Aorta (tissue), 5 donors: ENCODE measurements at regions of chr4 and their contacts with region 1.

Region 1: DNA sequence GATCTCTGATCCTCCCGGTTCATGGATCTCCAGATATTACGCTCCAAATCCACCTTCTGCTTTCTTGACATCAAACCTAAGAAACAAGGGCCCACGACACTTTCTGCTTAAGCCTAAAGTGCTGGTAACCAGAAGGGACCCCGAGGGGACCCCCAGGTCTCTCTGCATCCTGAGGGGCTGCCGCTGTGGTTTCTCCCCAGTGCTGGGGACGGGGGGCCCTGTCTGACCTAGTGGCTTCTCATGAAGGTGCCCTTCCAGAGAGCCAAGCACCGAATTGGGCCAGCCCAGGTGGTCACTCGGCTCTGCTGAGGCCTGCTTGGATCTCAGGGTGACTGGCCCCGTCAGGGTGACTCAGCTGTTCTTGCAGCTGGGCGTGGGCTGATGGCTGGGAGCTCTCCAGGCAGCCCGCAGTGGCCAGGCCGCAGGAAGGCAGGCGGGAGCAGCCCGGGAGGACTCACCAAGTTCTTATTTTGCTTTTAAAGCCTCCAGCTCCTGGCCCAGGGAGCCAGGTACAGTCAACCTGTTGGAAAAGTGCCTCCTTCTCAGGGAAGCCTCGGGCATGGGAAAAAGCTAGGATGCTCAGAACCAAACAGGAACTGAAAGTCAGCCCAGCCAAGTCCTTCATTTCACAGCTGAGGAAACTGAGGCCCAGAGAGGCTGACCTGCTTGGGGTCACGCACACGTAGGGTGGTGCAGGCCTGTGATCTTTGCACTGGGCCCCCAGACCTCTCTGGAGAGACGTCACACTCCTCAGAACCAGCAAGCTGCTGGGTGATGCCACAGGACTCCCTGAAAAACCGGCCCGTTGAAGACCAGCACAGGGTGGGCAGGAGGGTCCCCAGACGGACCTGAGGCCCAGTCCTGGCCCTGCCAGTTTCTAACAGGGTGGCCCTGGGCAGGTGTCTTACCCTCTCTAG is 16.7 kb downstream of the BLOC1S4 start:
- DNase-seq: peak; percentile 91 to 92
- ATAC-seq: peak; percentile 88
- H3K4me3 ChIP-seq: no peak overlapping the region
- H3K27ac ChIP-seq: peak overlapping the region in 1 of 2 donors; percentile 61
- H3K4me1 ChIP-seq: no peaks in the 10 kb centered on the region
- H3K27me3 ChIP-seq: no peaks in the 10 kb centered on the region

Region 2: GRCh38 chr4:6633041-6633906 is 99.4 kb before region 1 on chr4:
- intact Hi-C with region 1: no loop called
- DNase-seq: no peak
- ATAC-seq: no peak
- H3K4me3 ChIP-seq: no peak overlapping the region
- H3K27ac ChIP-seq: no peak overlapping the region
- H3K4me1 ChIP-seq: no peaks in the 10 kb centered on the region
- H3K27me3 ChIP-seq: no peaks in the 10 kb centered on the region

Region 3: DNA sequence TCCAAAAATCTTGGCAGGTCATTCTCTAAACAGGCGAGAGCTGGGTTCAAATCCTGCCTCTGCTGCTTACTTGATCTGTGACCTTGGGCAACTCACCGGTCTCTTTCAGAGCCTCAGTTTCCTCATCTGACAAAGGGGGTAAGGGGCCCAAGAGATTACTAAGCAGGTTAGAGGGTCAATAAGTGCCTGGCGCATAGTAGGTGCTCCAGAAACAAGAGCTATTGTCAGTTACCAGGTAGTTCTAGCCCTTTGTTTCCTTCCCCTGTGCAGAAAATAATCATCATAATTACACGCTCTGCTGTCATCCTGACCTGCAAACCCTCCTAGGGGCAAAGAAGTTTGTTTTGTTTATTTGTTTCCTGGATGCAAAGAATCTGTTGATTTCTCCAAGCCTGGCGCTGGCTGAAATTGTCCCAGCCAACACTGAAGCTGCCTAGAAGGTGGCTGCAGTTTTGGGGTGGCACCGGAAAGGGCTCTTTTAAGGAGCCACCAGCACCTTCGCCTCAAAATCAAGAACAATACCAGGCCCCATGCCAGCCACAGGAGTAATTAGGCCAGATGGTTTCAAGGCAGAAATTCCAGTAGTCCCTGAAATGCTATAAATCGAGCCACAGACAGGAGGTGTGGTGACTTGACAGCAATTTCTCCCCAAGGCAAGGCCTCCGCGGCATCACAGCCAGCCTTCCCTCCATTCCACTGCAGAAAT is 39.7 kb after region 1 on chr4:
- intact Hi-C with region 1: loop called in 1 of 2 experiments (anchors 5 kb)
- DNase-seq: no peak
- ATAC-seq: no peak
- H3K4me3 ChIP-seq: no peak overlapping the region
- H3K27ac ChIP-seq: peak overlapping the region in 1 of 2 donors; percentile 73
- H3K4me1 ChIP-seq: peaks cover 0 to 2% of the 10 kb centered on the region in 2 donors
- H3K27me3 ChIP-seq: no peaks in the 10 kb centered on the region

Region 4: DNA sequence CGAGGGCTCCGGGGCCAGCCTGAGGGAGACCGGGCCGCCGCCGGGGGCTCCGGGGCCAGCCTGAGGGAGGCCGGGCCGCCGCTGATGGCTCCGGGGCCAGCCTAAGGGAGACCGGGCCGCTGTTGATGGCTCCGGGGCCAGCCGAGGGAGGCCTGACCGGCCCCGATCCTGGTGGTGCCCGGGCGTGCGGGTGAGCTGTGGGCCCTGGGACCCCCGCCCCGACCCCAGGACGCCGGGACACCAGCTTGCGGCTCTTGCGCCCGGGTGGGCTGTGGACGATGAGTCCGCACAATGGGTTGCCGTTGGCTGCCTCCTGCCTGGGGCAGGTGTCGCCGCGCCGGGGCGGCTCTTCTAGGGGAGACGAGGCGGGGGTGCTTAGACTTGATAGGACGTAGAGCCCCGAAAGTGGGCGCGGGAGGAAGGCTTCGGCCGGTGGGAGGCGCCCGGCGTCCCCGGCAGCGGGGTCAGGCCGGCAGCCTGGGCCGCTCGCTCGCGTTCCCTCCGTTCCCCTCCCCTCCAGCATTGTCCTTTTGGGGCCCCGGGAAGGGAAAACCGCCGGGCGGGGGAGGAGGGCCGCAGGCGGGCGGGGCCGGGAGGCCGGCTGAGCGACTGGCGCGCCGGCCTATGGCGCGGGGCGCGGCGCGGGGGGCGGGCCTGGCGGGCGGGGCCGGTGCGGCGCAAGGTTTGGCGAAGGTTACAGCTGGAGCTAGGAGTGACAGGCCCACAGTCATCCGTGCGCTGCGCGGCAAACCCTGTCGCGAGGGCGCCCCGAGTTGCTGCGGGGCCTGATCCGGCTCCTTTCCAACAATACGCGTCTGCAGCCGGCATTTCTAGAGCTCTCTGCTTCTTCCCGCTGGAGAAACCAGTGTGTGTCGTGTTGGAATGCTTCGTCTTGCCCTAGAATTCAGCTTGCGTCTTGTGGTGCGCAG is 50.6 kb after region 1 on chr4:
- intact Hi-C with region 1: loop called in 1 of 2 experiments (anchors 5 kb)
- DNase-seq: peak; percentile 92 to 96
- ATAC-seq: peak; percentile 94
- H3K4me3 ChIP-seq: peak overlapping the region; percentile 90 to 96
- H3K27ac ChIP-seq: peak overlapping the region; percentile 98 to 99
- H3K4me1 ChIP-seq: no peaks in the 10 kb centered on the region
- H3K27me3 ChIP-seq: no peaks in the 10 kb centered on the region